Naive thymus-derived CD4-positive, alpha-beta T cell (primary cell): ENCODE measurements at regions of chr19 and their contacts with region 1.

Region 1: DNA sequence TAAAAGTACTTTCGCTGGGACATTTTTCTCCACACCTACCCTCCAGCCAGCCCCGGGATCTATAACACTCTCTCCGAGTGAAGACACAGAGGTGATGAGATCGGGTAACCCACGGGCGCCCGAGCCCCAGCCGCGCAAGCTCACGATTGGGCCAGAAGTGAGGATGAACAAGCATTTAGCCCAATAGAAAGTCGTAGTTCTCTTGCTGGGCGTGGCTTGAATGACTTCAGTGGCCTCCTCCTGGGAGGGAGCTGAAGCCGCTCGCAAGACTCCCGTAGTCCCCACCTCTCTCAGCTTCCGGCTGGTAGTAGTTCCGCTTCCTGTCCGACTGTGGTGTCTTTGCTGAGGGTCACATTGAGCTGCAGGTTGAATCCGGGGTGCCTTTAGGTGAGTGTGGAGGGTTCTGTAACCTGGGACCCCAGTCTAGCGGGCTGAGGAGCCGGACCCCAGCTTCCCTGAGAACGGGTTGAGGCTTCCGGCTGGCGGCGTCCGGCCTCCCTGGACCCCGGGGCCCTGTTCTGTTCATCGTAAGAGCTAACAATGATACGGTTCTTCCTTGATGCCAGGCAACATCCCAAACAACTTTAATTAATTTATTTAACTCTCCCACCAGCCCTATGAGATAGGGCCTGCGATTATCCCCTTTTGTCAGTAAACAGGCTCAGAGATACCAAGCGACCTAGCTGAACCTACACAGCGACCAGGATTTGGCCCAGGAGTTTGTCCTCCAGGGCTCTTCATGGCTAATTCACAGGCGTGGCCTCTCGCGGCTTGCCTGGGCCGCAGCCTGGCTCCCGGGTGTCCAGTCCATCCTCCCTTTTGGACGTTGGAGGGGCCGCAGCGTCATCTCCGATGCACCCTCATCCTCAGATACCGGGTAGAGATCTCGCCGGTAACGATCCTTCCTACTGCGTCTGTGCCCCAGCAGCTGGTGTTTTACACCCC is at the start of gene COX6B1:
- DNase-seq: peak; percentile 63 to 95 (median 91)
- ATAC-seq: peak; percentile 80
- H3K4me3 ChIP-seq: peak within 1 kb of the TSS; percentile 95
- H3K4me3 Mint-ChIP-seq: peak within 1 kb of the TSS; percentile 88 to 99 (median 97)
- H3K27ac ChIP-seq: peak within 1 kb of the TSS; percentile 89
- H3K27ac Mint-ChIP-seq: peak within 1 kb of the TSS; percentile 89 to 98 (median 95)
- H3K4me1 ChIP-seq: peaks cover 7 to 25% of the 10 kb centered on the region in 2 donors
- H3K4me1 Mint-ChIP-seq: peaks cover 17 to 67% (median 42%) of the 10 kb centered on the region in 7 donors
- H3K27me3 ChIP-seq: no peaks in the 10 kb centered on the region
- H3K27me3 Mint-ChIP-seq: no peaks in the 10 kb centered on the region
- total RNA-seq, gene COX6B1: 172 to 464 (median 232) TPM

Region 2: GRCh38 chr19:35612559-35613321 is 35.5 kb before region 1 on chr19 and contains the start of gene HAUS5:
- CTCF ChIA-PET with region 1: interaction called, 5 read pairs
- POLR2A ChIA-PET with region 1: interaction called, 16 read pairs
- intact Hi-C with region 1: loop called (anchors 1 kb)
- DNase-seq: peak; percentile 92 to 99 (median 95)
- ATAC-seq: peak; percentile 92
- H3K4me3 ChIP-seq: peak within 1 kb of the TSS; percentile 98
- H3K4me3 Mint-ChIP-seq: peak within 1 kb of the TSS; percentile 86 to 94 (median 89)
- H3K27ac ChIP-seq: peak within 1 kb of the TSS; percentile 86
- H3K27ac Mint-ChIP-seq: peak within 1 kb of the TSS; percentile 88 to 98 (median 94)
- H3K4me1 ChIP-seq: peaks cover 24 to 28% of the 10 kb centered on the region in 2 donors
- H3K4me1 Mint-ChIP-seq: peaks cover 4 to 50% (median 43%) of the 10 kb centered on the region in 7 donors
- H3K27me3 ChIP-seq: no peaks in the 10 kb centered on the region
- H3K27me3 Mint-ChIP-seq: peaks cover 0 to 2% (median 0%) of the 10 kb centered on the region in 5 donors
- total RNA-seq, gene HAUS5: 23.6 to 40.0 (median 28.4) TPM

Region 3: DNA sequence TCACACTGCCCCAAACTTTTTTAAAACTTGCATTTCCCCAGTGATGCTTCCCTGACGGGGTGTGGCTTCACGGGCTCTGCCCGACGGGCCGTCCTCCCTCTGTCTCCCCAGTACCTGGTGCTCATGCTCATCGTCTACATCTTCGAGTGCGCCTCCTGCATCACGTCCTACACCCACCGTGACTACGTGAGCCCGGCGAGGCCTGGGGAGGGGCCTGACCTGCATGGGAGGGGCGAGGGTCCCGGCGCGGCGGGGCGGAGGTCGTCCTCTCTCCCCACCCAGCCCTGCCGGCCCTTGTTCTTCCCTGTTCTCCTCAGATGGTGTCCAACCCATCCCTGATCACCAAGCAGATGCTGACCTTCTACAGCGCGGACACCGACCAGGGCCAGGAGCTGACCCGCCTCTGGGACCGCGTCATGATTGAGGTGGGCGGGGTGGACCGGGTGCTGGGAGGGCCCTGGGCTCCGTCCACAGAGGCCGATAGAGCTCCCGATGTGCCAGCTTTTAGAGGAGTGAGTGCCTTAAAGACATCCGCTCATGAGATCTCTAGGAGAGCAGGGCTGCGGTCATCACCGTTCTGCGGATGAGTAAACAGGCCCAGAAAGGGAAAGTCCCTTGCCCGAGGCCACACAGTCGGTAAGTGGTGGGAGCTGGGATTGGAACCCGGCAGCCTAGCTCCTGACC is 25.0 kb after region 1 on chr19:
- CTCF ChIA-PET with region 1: no interaction called
- POLR2A ChIA-PET with region 1: interaction called, 3 read pairs
- intact Hi-C with region 1: loop called in 1 of 2 experiments (anchors 1 kb)
- DNase-seq: peak in 5 of 9 donors; percentile 7 to 58 (median 14)
- ATAC-seq: peak; percentile 77
- H3K4me3 ChIP-seq: peak overlapping the region; percentile 46
- H3K4me3 Mint-ChIP-seq: peak overlapping the region; percentile 54 to 90 (median 74)
- H3K27ac ChIP-seq: no peak overlapping the region
- H3K27ac Mint-ChIP-seq: peak overlapping the region in 3 of 9 donors; percentile 36 to 72 (median 48)
- H3K4me1 ChIP-seq: no peaks in the 10 kb centered on the region
- H3K4me1 Mint-ChIP-seq: peaks cover 2 to 14% (median 9%) of the 10 kb centered on the region in 7 donors
- H3K27me3 ChIP-seq: peaks cover 0 to 3% of the 10 kb centered on the region in 2 donors
- H3K27me3 Mint-ChIP-seq: peaks cover 17 to 53% (median 24%) of the 10 kb centered on the region in 5 donors

Region 4: GRCh38 chr19:35740423-35741202 is 92.3 kb after region 1 on chr19:
- CTCF ChIA-PET with region 1: no interaction called
- POLR2A ChIA-PET with region 1: interaction called, 7 read pairs
- intact Hi-C with region 1: loop called (anchors 1 kb)
- DNase-seq: peak; percentile 81 to 95 (median 92)
- ATAC-seq: peak; percentile 78
- H3K4me3 ChIP-seq: peak overlapping the region; percentile 89
- H3K4me3 Mint-ChIP-seq: peak overlapping the region; percentile 87 to 100 (median 92)
- H3K27ac ChIP-seq: peak overlapping the region; percentile 91
- H3K27ac Mint-ChIP-seq: peak overlapping the region; percentile 85 to 99 (median 96)
- H3K4me1 ChIP-seq: peaks cover 27% of the 10 kb centered on the region in 2 donors
- H3K4me1 Mint-ChIP-seq: peaks cover 25 to 67% (median 48%) of the 10 kb centered on the region in 7 donors
- H3K27me3 ChIP-seq: no peaks in the 10 kb centered on the region
- H3K27me3 Mint-ChIP-seq: peaks cover 0 to 2% (median 0%) of the 10 kb centered on the region in 5 donors

Region 5: GRCh38 chr19:36114763-36115452 is 466.6 kb after region 1 on chr19 and contains the start of gene POLR2I:
- CTCF ChIA-PET with region 1: no interaction called
- POLR2A ChIA-PET with region 1: no interaction called
- intact Hi-C with region 1: loop called (anchors 1 kb)
- DNase-seq: peak; percentile 95 to 100 (median 99)
- ATAC-seq: peak; percentile 92
- H3K4me3 ChIP-seq: peak within 1 kb of the TSS; percentile 97
- H3K4me3 Mint-ChIP-seq: peak within 1 kb of the TSS; percentile 89 to 98 (median 96)
- H3K27ac ChIP-seq: peak within 1 kb of the TSS; percentile 90
- H3K27ac Mint-ChIP-seq: peak within 1 kb of the TSS; percentile 97 to 99 (median 98)
- H3K4me1 ChIP-seq: peaks cover 14 to 15% of the 10 kb centered on the region in 2 donors
- H3K4me1 Mint-ChIP-seq: peaks cover 27 to 54% (median 42%) of the 10 kb centered on the region in 7 donors
- H3K27me3 ChIP-seq: no peaks in the 10 kb centered on the region
- H3K27me3 Mint-ChIP-seq: peaks cover 0 to 5% (median 0%) of the 10 kb centered on the region in 5 donors
- total RNA-seq, gene POLR2I: 20.9 to 56.7 (median 44.7) TPM